Astrocyte of the cerebellum (primary cell): ENCODE measurements at regions of chr2 and their contacts with region 1.

Region 1: GRCh38 chr2:237529452-237530402 is 36.6 kb upstream of the PRLH start:
- DNase-seq: no peak
- H3K4me3 ChIP-seq: no peak overlapping the region
- CTCF ChIP-seq: no peak

Region 2: GRCh38 chr2:237427769-237428506 is 101.8 kb before region 1 on chr2:
- in situ Hi-C with region 1: loop called (anchors 5 kb)
- DNase-seq: no peak
- H3K4me3 ChIP-seq: no peak overlapping the region
- CTCF ChIP-seq: no peak